Activated CD8-positive, alpha-beta T cell treated with anti-CD3 and anti-CD28 coated beads, Interleukin-2, amount 10 ng/mL, durations not matched to agents 7 days and 5 days (primary cell): ENCODE measurements at regions of chr14 and their contacts with region 1.

Region 1: GRCh38 chr14:102524466-102525218 is 15.1 kb upstream of the ANKRD9 start:
- DNase-seq: peak; percentile 98
- ATAC-seq: peak; percentile 99
- H3K4me3 Mint-ChIP-seq: peak overlapping the region; percentile 84
- H3K27ac Mint-ChIP-seq: peak overlapping the region; percentile 95
- H3K4me1 Mint-ChIP-seq: peaks cover 33% of the 10 kb centered on the region
- H3K27me3 Mint-ChIP-seq: no peaks in the 10 kb centered on the region

Region 2: DNA sequence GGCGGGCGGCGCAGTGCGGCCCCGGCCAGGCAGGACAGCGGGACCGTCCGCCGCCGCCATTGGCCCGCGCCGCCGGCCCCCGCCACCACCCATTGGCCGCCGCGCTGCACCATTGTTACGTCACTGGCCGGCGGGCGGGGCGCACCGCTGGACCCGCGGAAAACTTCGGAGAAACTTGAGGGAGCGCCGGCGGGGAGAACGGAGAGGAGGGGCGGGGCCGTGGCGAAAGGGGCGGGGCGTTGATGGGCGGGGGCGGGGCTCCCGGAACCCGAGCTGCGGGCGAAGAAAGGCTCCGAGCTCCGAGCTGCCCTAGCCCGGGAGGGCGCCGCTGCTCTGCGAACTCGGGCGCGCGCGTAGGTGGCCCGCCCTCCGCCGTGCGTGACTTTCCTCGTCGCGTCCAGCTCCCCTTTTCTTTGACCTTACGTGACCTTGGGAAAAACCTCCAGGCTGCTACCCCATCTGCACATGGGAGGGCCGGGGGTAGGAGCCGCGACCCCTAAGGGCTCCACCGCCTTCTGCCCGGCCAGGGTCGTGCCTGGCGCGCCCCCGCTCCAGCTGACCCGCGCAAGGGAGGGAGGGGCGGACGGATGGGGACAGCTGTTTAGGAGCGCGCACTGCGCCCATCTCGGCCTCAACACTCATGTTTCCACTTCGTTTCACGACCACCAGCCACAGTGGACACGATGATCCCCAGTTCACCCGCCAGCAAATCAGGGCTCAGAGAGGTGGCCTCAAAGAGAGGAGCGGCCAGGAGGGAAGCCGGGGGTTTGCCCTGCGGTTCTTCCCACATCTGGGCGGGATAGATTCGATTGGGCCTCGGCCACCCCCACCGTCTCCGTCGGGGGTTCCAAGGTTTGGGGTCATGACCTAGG is 14.7 kb before region 1 on chr14 and contains the start of gene ANKRD9:
- CTCF ChIA-PET with region 1: interaction called, 16 read pairs
- POLR2A ChIA-PET with region 1: no interaction called
- DNase-seq: peak; percentile 93
- ATAC-seq: peak; percentile 90
- H3K4me3 Mint-ChIP-seq: peak within 1 kb of the TSS; percentile 83
- H3K27ac Mint-ChIP-seq: peak within 1 kb of the TSS; percentile 79
- H3K4me1 Mint-ChIP-seq: peaks cover 16% of the 10 kb centered on the region
- H3K27me3 Mint-ChIP-seq: peaks cover 5% of the 10 kb centered on the region
- total RNA-seq, gene ANKRD9: 9.7 to 10.0 TPM

Region 3: GRCh38 chr14:102565331-102565887 is 40.8 kb after region 1 on chr14:
- CTCF ChIA-PET with region 1: interaction called, 16 read pairs
- POLR2A ChIA-PET with region 1: no interaction called
- DNase-seq: no peak
- ATAC-seq: no peak
- H3K4me3 Mint-ChIP-seq: no peak overlapping the region
- H3K27ac Mint-ChIP-seq: no peak overlapping the region
- H3K4me1 Mint-ChIP-seq: peaks cover 25% of the 10 kb centered on the region
- H3K27me3 Mint-ChIP-seq: no peaks in the 10 kb centered on the region